PC-9 (cell line): ENCODE measurements at regions of chr9 and their contacts with region 1.

Region 1: GRCh38 chr9:135602789-135603481 is 36.4 kb downstream of the GLT6D1 start:
- DNase-seq: peak in 1 of 2 experiments; percentile 48
- H3K4me3 ChIP-seq: no peak overlapping the region
- H3K27ac ChIP-seq: no peak overlapping the region
- H3K4me1 ChIP-seq: no peaks in the 10 kb centered on the region
- H3K27me3 ChIP-seq: peaks cover 70% of the 10 kb centered on the region
- CTCF ChIP-seq: peak; percentile 90

Region 2: GRCh38 chr9:133837627-133838597 is 1765.0 kb before region 1 on chr9:
- CTCF ChIA-PET with region 1: no interaction called
- POLR2A ChIA-PET with region 1: interaction called, 20 read pairs
- intact Hi-C with region 1: no loop called
- DNase-seq: no peak
- H3K4me3 ChIP-seq: no peak overlapping the region
- H3K27ac ChIP-seq: no peak overlapping the region
- H3K4me1 ChIP-seq: no peaks in the 10 kb centered on the region
- H3K27me3 ChIP-seq: no peaks in the 10 kb centered on the region
- CTCF ChIP-seq: no peak

Region 3: GRCh38 chr9:135574331-135574730 is 28.6 kb before region 1 on chr9:
- CTCF ChIA-PET with region 1: no interaction called
- POLR2A ChIA-PET with region 1: no interaction called
- intact Hi-C with region 1: no loop called
- DNase-seq: no peak
- H3K4me3 ChIP-seq: no peak overlapping the region
- H3K27ac ChIP-seq: no peak overlapping the region
- H3K4me1 ChIP-seq: no peaks in the 10 kb centered on the region
- H3K27me3 ChIP-seq: peaks cover 68% of the 10 kb centered on the region
- CTCF ChIP-seq: no peak

Region 4: DNA sequence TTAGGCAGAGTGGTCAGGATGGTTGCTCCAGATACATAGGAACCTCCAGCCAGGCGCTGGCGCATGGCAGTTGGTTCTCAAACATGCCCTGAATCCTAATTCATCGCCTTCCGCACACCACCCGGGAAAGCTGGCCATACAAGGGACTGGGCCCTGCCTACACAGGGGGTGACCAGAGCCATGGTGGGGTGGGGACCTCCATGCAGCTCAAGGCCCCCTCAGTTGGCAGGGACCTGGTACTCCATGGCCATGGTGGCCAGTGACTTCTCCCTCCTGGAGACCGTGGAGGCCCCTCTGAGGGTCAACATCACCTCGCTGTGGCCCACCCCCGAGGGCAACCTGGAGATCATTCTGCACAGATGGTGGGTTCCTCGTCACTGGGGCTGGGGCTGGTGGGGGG is 14.6 kb before region 1 on chr9:
- CTCF ChIA-PET with region 1: interaction called, 10 read pairs
- POLR2A ChIA-PET with region 1: no interaction called
- intact Hi-C with region 1: no loop called
- DNase-seq: no peak
- H3K4me3 ChIP-seq: no peak overlapping the region
- H3K27ac ChIP-seq: no peak overlapping the region
- H3K4me1 ChIP-seq: no peaks in the 10 kb centered on the region
- H3K27me3 ChIP-seq: peaks cover 57% of the 10 kb centered on the region
- CTCF ChIP-seq: no peak

Region 5: DNA sequence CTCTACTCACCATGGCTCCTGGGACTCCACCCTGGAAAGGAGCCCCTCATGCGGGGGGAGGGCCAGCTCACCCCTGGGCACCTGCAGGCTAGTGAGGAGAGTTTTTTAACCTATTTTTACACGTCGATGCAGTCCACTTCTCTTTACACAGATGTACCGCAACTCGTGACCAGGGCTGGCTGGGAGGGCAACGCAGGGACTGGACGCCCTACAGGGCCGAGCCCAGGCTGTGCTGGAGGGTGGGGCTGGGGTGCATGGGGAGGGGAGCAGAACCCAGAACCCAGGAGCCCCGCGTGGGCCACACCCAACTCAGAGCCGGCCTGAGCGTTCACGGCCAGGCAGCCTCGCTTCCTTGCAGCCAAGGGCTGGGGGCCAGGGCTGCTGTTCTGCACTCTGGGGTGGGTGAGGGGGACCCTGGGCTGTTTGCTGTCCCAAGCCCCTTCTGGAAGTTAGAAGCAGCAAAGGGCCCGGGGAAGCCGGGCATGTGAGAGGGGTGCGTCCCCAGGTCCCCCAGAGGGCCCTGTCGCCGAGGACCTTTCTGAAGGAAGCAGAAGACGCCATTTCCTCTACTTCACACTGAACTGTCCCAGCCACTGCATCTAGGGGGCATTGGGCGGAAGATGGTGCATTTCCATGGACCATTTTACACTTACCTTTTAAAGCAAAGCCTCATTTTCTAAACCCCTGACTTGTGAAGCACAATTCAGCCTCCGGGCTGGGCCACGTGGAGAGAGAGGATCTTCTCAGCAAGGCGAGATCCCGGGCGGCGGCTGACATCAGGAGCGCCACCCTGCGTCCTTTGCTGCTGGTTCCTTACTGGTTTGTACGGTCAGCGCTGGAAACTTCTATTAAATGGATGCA is 189.6 kb after region 1 on chr9:
- CTCF ChIA-PET with region 1: no interaction called
- POLR2A ChIA-PET with region 1: no interaction called
- intact Hi-C with region 1: loop called (anchors 5 kb)
- DNase-seq: no peak
- H3K4me3 ChIP-seq: no peak overlapping the region
- H3K27ac ChIP-seq: no peak overlapping the region
- H3K4me1 ChIP-seq: no peaks in the 10 kb centered on the region
- H3K27me3 ChIP-seq: no peaks in the 10 kb centered on the region
- CTCF ChIP-seq: no peak

Region 6: GRCh38 chr9:137108608-137109249 is 1505.8 kb after region 1 on chr9:
- CTCF ChIA-PET with region 1: no interaction called
- POLR2A ChIA-PET with region 1: no interaction called
- intact Hi-C with region 1: no loop called
- DNase-seq: no peak
- H3K4me3 ChIP-seq: no peak overlapping the region
- H3K27ac ChIP-seq: no peak overlapping the region
- H3K4me1 ChIP-seq: no peaks in the 10 kb centered on the region
- H3K27me3 ChIP-seq: no peaks in the 10 kb centered on the region
- CTCF ChIP-seq: no peak